Left ventricle myocardium superior (tissue), 1 donor: ENCODE measurements at regions of chr1 and their contacts with region 1.

Region 1: GRCh38 chr1:96966536-96967138 is 245.1 kb downstream of the PTBP2 start:
- DNase-seq: peak; percentile 75
- ATAC-seq: peak; percentile 79

Region 2: DNA sequence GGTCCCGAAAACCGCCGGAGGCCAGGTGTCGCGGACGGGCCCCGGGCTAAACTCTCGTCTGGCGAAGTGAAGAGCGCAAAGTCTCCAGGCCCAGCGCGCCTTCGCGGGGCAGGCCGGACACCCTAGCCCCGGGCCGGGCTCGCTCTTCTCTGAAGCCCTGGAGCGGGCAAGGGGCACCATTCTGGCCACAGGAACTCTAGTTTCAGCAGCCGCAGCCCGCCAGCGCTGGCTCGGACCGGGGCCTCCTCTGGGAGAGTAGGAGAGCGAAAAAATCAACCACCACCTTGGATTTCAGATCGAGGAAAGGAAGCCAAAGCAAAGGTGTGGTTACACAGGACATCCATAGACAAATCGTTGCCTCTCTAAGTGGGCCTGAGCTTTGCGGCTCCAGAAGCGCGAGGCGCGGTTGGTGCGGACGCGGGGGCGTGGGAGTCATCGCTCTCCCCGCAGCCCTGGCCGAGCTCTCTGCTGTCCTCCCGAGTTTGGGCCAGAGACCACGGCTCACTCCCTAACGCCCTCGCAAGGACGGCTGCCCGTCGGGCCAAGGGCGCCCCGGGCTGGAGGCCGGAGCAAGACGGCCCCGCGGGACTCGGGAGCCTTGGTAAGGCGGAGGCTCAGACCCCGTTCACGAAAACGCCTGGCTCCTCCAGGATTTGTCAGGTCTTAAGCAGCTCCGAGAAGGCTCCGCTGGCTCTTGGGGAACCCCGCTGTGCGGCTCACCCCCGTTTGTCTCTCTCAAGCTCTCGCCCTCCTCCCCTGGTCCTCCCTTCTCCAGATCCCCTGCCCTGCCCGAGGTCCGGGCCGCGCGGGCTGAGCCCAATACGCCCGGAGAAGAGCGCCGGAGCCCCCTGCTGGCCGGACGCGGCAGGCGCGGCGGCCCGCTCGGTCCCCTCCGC is 1087.1 kb after region 1 on chr1:
- intact Hi-C with region 1: loop called (anchors 5 kb)
- DNase-seq: peak; percentile 76
- ATAC-seq: peak; percentile 100